Heart left ventricle (tissue), 16 donors: ENCODE measurements at regions of chr7 and their contacts with region 1.

Region 1: DNA sequence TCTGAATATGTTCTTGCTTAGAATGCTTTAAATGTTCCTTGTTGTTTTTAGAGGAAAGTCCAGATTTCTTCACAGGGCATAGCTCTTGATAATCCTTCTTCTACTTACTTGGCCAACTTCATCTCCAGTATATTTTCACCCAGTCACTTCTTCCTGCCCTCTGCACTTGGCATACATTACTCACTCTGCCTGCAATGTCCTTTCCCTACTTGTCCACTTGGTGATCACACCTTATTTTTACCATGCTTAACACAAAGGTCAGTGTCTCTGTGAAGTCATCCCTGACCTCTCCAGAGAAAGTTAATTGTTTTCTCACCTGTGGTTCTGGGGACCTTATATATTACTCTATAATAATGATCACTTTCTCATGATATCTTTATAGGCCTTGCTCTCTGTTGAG is 23.3 kb downstream of the SFRP4 start:
- DNase-seq: no peak
- ATAC-seq: no peak
- H3K4me3 ChIP-seq: no peak overlapping the region
- H3K27ac ChIP-seq: no peak overlapping the region
- H3K4me1 ChIP-seq: no peaks in the 10 kb centered on the region
- H3K27me3 ChIP-seq: peaks cover 0 to 4% (median 0%) of the 10 kb centered on the region in 9 donors
- CTCF ChIP-seq: no peak
- POLR2A ChIP-seq: no peak

Region 2: GRCh38 chr7:37853474-37853873 is 39.9 kb before region 1 on chr7:
- intact Hi-C with region 1: loop called in 1 of 10 experiments (anchors 2 kb)
- DNase-seq: no peak
- ATAC-seq: no peak
- H3K4me3 ChIP-seq: no peak overlapping the region
- H3K27ac ChIP-seq: no peak overlapping the region
- H3K4me1 ChIP-seq: no peaks in the 10 kb centered on the region
- H3K27me3 ChIP-seq: peaks cover 0 to 2% (median 0%) of the 10 kb centered on the region in 9 donors
- CTCF ChIP-seq: peak in 6 of 12 donors; percentile 11 to 44 (median 35)
- POLR2A ChIP-seq: no peak

Region 3: GRCh38 chr7:37977243-37977642 is 83.9 kb after region 1 on chr7:
- intact Hi-C with region 1: no loop called
- DNase-seq: no peak
- ATAC-seq: no peak
- H3K4me3 ChIP-seq: no peak overlapping the region
- H3K27ac ChIP-seq: no peak overlapping the region
- H3K4me1 ChIP-seq: peaks cover 0 to 2% (median 0%) of the 10 kb centered on the region in 12 donors
- H3K27me3 ChIP-seq: peaks cover 0 to 3% (median 0%) of the 10 kb centered on the region in 9 donors
- CTCF ChIP-seq: no peak
- POLR2A ChIP-seq: no peak

Region 4: DNA sequence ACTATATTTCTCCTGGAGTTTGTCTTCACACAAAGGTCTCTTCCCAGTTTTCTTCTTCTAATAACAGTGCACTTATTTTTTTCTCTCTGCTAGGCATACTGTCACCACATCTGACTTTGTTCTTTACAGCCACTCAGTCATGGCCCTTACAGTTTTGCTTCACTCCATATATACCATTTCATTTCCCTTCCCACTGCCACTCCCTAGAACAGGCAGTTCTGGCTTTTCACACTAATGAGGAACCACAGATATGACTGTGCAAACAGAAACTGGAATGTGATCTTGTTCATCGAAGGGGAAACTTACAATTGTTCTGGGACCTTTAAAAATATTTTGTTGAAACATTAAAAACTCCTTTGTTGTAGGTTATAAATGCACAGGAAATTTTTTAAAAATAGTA is 94.4 kb after region 1 on chr7:
- intact Hi-C with region 1: no loop called
- DNase-seq: no peak
- ATAC-seq: peak in 3 of 4 donors; percentile 58 to 78 (median 67)
- H3K4me3 ChIP-seq: no peak overlapping the region
- H3K27ac ChIP-seq: peak overlapping the region in 4 of 12 donors; percentile 10 to 49 (median 28)
- H3K4me1 ChIP-seq: peaks cover 0 to 12% (median 0%) of the 10 kb centered on the region in 12 donors
- H3K27me3 ChIP-seq: no peaks in the 10 kb centered on the region
- CTCF ChIP-seq: no peak
- POLR2A ChIP-seq: no peak

Region 5: GRCh38 chr7:38016567-38016966 is 123.2 kb after region 1 on chr7:
- intact Hi-C with region 1: no loop called
- DNase-seq: no peak
- ATAC-seq: no peak
- H3K4me3 ChIP-seq: no peak overlapping the region
- H3K27ac ChIP-seq: no peak overlapping the region
- H3K4me1 ChIP-seq: peaks cover 0 to 9% (median 0%) of the 10 kb centered on the region in 12 donors
- H3K27me3 ChIP-seq: no peaks in the 10 kb centered on the region
- CTCF ChIP-seq: no peak
- POLR2A ChIP-seq: no peak

Region 6: DNA sequence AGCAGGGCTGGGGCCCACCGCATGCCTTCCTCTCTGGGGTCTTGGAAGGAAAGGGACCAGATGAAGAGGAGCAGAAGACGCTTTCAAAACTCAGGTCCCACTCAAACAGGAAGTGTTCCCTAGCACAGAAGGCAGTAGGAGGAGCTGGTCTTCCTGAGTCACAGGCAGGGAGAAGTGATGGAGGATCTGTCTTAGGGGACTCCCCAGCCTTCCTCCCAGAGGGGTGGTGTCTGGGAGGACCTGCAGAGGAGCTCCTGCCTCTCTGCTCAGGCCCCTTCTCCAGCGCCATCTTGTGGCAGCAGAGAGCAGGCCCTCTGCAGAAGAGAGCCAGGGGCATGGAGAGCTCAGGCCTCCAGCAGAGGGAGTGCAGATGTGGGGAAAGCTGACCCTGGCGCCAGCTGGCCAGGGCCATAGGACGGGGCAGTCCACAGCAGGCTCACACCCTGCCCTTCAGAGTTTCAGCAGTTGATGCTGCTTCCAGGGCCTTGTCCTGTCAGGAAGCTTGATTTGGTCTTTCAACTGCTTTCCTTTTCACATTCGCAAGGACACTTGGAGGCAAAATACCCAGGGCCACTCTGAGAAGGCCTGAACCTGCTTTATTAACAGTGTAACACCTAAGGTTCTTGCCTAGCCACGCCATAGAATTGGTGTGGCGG is 442.3 kb after region 1 on chr7:
- intact Hi-C with region 1: no loop called
- DNase-seq: peak; percentile 82 to 91 (median 89)
- ATAC-seq: peak; percentile 91 to 96 (median 94)
- H3K4me3 ChIP-seq: peak overlapping the region in 3 of 12 donors; percentile 11 to 48 (median 29)
- H3K27ac ChIP-seq: peak overlapping the region in 9 of 12 donors; percentile 6 to 90 (median 33)
- H3K4me1 ChIP-seq: peaks cover 0 to 29% (median 4%) of the 10 kb centered on the region in 12 donors
- H3K27me3 ChIP-seq: no peaks in the 10 kb centered on the region
- CTCF ChIP-seq: peak; percentile 77 to 98 (median 88)
- POLR2A ChIP-seq: no peak